HAP-1 (cell line): ENCODE measurements at regions of chr2 and their contacts with region 1.

Region 1: DNA sequence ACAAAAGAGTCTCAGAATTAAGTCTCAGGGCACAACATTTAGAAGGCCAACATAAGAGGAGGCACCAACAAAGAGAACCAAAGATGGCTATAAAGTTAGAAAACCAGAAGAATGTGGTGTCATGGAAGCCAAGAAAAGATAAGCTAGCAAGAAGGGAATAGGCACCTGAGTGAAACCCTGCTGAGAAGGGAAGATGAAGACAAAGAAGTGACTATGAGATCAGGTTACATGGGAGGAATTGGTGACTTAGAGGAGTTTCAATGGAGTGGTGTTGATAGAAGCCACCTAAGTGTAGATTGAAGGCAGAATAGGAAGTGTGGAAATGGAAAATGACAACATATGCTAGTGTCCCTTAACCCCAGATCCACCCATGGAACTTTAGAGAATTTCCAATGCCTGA is 327.6 kb upstream of the KCNJ3 start:
- DNase-seq: no peak
- H3K4me3 ChIP-seq: no peak overlapping the region
- H3K4me1 ChIP-seq: 0 out of 2 replicates have a peak, but pooled peaks cover 3% of the 10 kb centered on the region
- H3K27me3 ChIP-seq: no peaks in the 10 kb centered on the region

Region 2: GRCh38 chr2:153787612-153788011 is 583.3 kb before region 1 on chr2:
- in situ Hi-C with region 1: loop called (anchors 25 kb)
- DNase-seq: no peak
- H3K4me3 ChIP-seq: no peak overlapping the region
- H3K4me1 ChIP-seq: no peaks in the 10 kb centered on the region
- H3K27me3 ChIP-seq: no peaks in the 10 kb centered on the region